Activated CD4-positive, alpha-beta memory T cell treated with anti-CD3 and anti-CD28 coated beads for 36 hours (primary cell): ENCODE measurements at regions of chr9 and their contacts with region 1.

Region 1: DNA sequence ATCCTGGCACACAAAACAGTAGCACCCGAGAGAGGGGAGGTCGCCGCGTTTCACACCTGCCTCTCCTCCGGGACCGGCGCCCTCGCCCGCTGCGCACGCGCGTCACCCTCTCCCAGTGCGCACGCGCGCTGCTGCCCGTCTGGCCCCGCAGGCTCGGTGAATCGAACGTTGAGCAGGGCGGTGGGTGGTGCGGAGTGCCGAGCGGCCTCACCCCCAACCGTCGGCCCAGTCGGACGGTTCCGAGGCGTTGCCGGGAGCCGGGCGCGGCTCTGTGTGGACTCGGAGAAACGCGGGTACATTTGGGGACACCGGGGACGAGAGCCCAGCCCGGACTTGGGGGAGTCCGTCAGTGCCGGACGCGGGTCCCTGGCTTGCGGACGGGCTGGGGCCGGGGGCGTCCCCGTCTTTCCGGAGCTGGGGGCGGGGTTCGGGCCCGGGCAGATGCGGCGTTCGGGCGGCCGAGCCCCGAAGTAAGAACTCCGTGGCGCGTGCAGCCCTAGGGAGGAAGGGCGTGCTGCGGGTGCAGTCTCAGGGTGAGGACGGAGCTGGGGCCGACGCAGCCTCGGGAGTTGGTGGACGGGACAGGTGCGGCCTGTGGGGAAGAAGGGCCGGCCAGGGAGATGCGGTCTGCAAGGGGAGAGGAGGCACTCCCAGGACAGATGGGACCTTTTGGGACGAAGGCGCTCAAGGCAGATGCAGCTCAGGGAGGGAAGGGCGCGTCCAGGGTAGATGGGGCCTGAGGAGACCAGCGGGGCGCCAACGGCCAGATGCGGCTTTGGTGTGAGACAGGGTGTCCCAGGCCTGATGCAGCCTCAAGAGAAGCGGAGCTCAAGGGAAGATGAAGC is at the start of gene POMT1:
- DNase-seq: peak; percentile 92
- H3K4me3 Mint-ChIP-seq: peak within 1 kb of the TSS; percentile 97
- H3K27ac Mint-ChIP-seq: peak within 1 kb of the TSS; percentile 85
- H3K4me1 Mint-ChIP-seq: peaks cover 50% of the 10 kb centered on the region
- H3K27me3 Mint-ChIP-seq: no peaks in the 10 kb centered on the region
- total RNA-seq, gene POMT1: 42.8 to 43.2 TPM

Region 2: DNA sequence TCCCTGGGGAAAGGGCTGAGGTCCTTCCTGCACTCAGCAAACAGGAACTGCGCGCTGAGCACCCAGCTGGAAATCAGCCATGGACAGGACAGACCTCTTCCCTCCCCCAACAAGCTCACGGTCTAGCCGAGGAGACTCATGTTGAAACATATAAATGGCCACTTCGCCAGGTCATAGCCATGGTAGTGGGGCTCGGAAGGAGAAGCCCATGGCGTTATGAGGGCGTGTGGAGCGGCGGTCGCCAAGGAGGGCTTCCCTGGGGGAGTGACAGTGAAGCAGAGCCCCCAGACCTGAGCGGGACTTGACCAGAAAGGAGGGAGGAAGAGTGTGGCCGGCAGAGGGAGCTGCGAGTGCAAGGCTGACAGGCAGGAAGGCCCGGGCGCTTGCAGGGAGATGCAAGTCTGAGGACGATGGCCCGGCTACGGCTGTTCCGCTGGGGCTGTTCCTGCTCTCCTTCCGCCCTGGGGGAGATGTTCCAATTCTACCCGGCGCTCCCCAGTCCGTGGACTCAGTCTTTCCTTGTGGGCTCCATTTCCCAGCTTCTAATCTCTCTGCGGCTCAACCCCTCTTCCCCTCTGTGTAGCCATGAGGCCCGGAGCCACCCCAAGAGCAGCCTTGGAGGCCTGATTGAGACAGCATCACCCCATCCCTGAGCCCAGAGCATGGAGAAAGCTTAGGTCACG is 153.0 kb before region 1 on chr9:
- CTCF ChIA-PET with region 1: interaction called, 12 read pairs
- POLR2A ChIA-PET with region 1: no interaction called
- intact Hi-C with region 1: no loop called
- DNase-seq: peak; percentile 92
- H3K4me3 Mint-ChIP-seq: no peak overlapping the region
- H3K27ac Mint-ChIP-seq: no peak overlapping the region
- H3K4me1 Mint-ChIP-seq: peaks cover 5% of the 10 kb centered on the region
- H3K27me3 Mint-ChIP-seq: no peaks in the 10 kb centered on the region

Region 3: GRCh38 chr9:131478421-131478868 is 24.6 kb before region 1 on chr9:
- CTCF ChIA-PET with region 1: interaction called, 14 read pairs
- POLR2A ChIA-PET with region 1: interaction called, 4 read pairs
- intact Hi-C with region 1: no loop called
- DNase-seq: peak; percentile 69
- H3K4me3 Mint-ChIP-seq: no peak overlapping the region
- H3K27ac Mint-ChIP-seq: no peak overlapping the region
- H3K4me1 Mint-ChIP-seq: peaks cover 11% of the 10 kb centered on the region
- H3K27me3 Mint-ChIP-seq: no peaks in the 10 kb centered on the region

Region 4: GRCh38 chr9:131645078-131645776 is 142.2 kb after region 1 on chr9:
- CTCF ChIA-PET with region 1: interaction called, 5 read pairs
- POLR2A ChIA-PET with region 1: no interaction called
- intact Hi-C with region 1: loop called (anchors 1 kb)
- DNase-seq: peak; percentile 65
- H3K4me3 Mint-ChIP-seq: peak overlapping the region; percentile 43
- H3K27ac Mint-ChIP-seq: peak overlapping the region; percentile 94
- H3K4me1 Mint-ChIP-seq: peaks cover 68% of the 10 kb centered on the region
- H3K27me3 Mint-ChIP-seq: no peaks in the 10 kb centered on the region

Region 5: GRCh38 chr9:131747356-131747755 is 244.4 kb after region 1 on chr9:
- CTCF ChIA-PET with region 1: interaction called, 6 read pairs
- POLR2A ChIA-PET with region 1: no interaction called
- intact Hi-C with region 1: loop called (anchors 5 kb)
- DNase-seq: peak; percentile 51
- H3K4me3 Mint-ChIP-seq: no peak overlapping the region
- H3K27ac Mint-ChIP-seq: peak overlapping the region; percentile 49
- H3K4me1 Mint-ChIP-seq: peaks cover 29% of the 10 kb centered on the region
- H3K27me3 Mint-ChIP-seq: no peaks in the 10 kb centered on the region

Region 6: DNA sequence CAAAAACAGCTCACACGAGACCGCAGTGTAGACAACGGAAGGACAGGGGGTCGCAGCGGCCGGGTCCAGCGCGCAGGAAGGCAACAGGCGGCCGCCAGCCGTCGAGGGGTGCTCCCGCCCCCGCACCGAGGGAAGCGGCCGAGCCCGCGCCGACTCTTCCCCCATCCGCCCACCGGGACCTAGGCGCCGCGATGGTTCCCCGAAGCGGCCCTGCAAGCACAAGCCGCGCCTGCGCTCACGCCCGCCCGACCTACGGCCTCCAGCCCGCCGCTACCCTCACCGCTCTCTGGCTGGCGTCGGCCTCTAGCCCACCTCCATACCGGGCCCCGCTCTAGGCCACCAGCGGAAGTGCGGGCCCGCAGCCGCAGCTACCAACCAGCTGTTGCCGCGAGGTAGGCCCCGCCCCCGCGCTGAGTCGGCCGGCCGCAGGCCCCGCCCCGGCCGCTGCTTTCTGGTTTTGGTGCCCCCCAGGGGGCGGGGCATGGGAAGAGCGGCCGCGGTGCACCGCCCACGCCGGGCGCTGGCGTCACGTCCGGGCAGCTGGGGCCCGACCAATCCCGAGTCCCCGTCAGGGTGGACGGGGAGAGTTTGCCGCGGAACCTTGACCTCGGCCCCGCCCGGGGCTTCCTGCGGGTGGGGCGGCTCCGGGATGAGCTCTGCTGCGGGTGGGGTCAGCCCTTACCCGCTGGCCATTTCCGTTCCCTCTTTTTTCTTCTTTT is 851.8 kb after region 1 on chr9 and contains the start of gene SETX:
- CTCF ChIA-PET with region 1: no interaction called
- POLR2A ChIA-PET with region 1: interaction called, 4 read pairs
- intact Hi-C with region 1: loop called (anchors 5 kb)
- DNase-seq: peak; percentile 97
- H3K4me3 Mint-ChIP-seq: peak within 1 kb of the TSS; percentile 91
- H3K27ac Mint-ChIP-seq: peak within 1 kb of the TSS; percentile 97
- H3K4me1 Mint-ChIP-seq: peaks cover 37% of the 10 kb centered on the region
- H3K27me3 Mint-ChIP-seq: no peaks in the 10 kb centered on the region
- total RNA-seq, gene SETX: 41.6 to 42.3 TPM